ENCODE measurements at regions of chr2 and their contacts with region 1.

Region 1: DNA sequence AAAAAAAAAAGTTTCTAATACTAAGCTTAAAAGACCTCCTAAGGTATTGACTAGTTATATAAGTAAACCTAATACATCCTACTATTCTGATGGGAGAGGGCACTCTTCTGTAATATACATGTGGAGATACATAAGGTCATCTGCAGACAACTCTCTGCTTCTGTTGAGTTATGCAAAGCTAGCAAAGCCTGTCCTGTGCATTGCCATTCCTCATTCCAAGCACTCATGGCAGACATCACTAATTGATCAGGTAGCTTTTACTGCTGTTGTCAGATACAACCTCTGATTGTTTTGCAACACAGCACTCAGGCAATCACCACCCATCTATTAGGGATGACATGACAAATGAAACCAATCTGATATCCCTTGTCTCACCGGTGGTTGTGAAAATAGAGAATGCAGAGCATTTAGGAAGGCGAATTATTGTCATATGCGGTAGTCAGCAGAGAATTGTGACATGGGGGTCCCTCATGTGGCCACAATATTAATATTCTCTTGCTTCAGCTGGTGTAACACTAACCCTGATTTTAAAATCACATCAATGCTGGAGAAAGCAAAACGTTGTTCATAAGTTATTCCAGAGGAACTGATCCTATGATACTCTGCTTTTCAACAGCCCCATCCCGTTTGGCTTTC is 416.5 kb upstream of the GYPC start:
- DNase-seq: no peak
- H3K4me3 ChIP-seq: no peak overlapping the region
- H3K4me3 Mint-ChIP-seq: no peak overlapping the region
- H3K27ac Mint-ChIP-seq: no peak overlapping the region
- H3K4me1 ChIP-seq: no peaks in the 10 kb centered on the region
- H3K4me1 Mint-ChIP-seq: no peaks in the 10 kb centered on the region
- H3K27me3 ChIP-seq: no peaks in the 10 kb centered on the region
- H3K27me3 Mint-ChIP-seq: no peaks in the 10 kb centered on the region
- CTCF ChIP-seq: no peak

Region 2: DNA sequence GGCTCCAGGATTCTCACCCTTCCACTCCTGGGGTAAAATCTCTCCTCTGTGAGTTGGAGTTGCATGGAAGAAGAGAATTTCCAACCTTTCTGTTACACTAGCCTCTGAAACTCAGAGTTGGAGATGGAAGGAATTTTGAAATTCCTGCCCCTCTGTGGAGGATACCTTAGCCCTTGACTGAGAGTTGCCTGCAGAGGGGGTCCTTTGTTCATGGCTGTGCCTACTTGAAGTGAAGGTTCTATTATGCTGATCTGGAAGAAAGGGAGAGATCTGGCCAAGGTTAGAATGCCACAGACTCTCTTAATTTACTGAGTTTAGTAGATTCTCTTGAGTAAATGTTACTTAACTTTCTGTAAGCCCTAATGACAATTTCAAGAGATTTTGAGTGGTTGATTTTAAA is 210.1 kb before region 1 on chr2:
- CTCF ChIA-PET with region 1: no interaction called
- POLR2A ChIA-PET with region 1: no interaction called
- intact Hi-C with region 1: loop called (anchors 2 kb)
- DNase-seq: peak in 1 of 2 experiments; percentile 32
- H3K4me3 ChIP-seq: no peak overlapping the region
- H3K4me3 Mint-ChIP-seq: no peak overlapping the region
- H3K27ac Mint-ChIP-seq: no peak overlapping the region
- H3K4me1 ChIP-seq: peaks cover 8% of the 10 kb centered on the region; the same call in 1 of the 2 replicates
- H3K4me1 Mint-ChIP-seq: no peaks in the 10 kb centered on the region
- H3K27me3 ChIP-seq: no peaks in the 10 kb centered on the region
- H3K27me3 Mint-ChIP-seq: no peaks in the 10 kb centered on the region
- CTCF ChIP-seq: peak in 1 of 2 experiments; percentile 36

Measured in Caco-2 (cell line).